HEK293 (cell line): ENCODE measurements at regions of chr15 and their contacts with region 1.

Region 1: GRCh38 chr15:51162865-51163762 is 68.4 kb upstream of the TNFAIP8L3 start:
- H3K4me3 ChIP-seq: no peak overlapping the region
- H3K27ac ChIP-seq: no peak overlapping the region; the same call in 1 of the 2 replicates
- H3K4me1 ChIP-seq: no peaks in the 10 kb centered on the region
- CTCF ChIP-seq: peak; percentile 57

Region 2: DNA sequence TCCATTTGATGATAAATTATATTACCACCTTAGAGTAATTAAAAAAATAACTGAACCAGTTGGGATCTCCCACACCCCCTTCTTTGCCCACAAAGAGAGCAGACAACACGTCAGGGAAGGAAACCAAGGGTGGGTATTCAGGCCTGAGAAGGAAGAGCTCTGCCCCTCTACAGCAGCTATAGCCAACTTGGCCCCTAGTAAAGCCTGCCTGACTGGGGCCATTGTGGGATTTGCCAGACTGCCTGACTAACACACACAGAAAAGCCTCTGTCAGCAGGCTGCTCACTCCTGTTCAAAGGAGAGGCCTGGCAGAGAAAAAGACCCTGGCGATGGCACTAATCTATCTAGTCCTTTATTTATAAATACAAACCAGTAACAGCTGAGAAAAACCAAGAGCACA is 1085.5 kb before region 1 on chr15:
- CTCF ChIA-PET with region 1: no interaction called
- POLR2A ChIA-PET with region 1: no interaction called
- H3K4me3 ChIP-seq: no peak overlapping the region
- H3K27ac ChIP-seq: no peak overlapping the region
- H3K4me1 ChIP-seq: no peaks in the 10 kb centered on the region
- CTCF ChIP-seq: no peak

Region 3: GRCh38 chr15:50753463-50753862 is 409.7 kb before region 1 on chr15:
- CTCF ChIA-PET with region 1: no interaction called
- POLR2A ChIA-PET with region 1: no interaction called
- H3K4me3 ChIP-seq: no peak overlapping the region
- H3K27ac ChIP-seq: no peak overlapping the region
- H3K4me1 ChIP-seq: peaks cover 2% of the 10 kb centered on the region; the same call in 1 of the 2 replicates
- CTCF ChIP-seq: no peak

Region 4: GRCh38 chr15:51144021-51144532 is 19.0 kb before region 1 on chr15:
- CTCF ChIA-PET with region 1: interaction called, 15 read pairs
- POLR2A ChIA-PET with region 1: no interaction called
- H3K4me3 ChIP-seq: no peak overlapping the region
- H3K27ac ChIP-seq: no peak overlapping the region
- H3K4me1 ChIP-seq: no peaks in the 10 kb centered on the region
- CTCF ChIP-seq: no peak

Region 5: GRCh38 chr15:51192521-51193280 is 29.6 kb after region 1 on chr15:
- CTCF ChIA-PET with region 1: interaction called, 76 read pairs
- POLR2A ChIA-PET with region 1: no interaction called
- H3K4me3 ChIP-seq: no peak overlapping the region
- H3K27ac ChIP-seq: no peak overlapping the region
- H3K4me1 ChIP-seq: no peaks in the 10 kb centered on the region; the same call in 1 of the 2 replicates
- CTCF ChIP-seq: peak; percentile 62; the same call in 1 of the 2 replicates

Region 6: GRCh38 chr15:51227940-51228783 is 65.0 kb after region 1 on chr15:
- CTCF ChIA-PET with region 1: interaction called, 14 read pairs
- POLR2A ChIA-PET with region 1: interaction called, 4 read pairs
- H3K4me3 ChIP-seq: no peak overlapping the region
- H3K27ac ChIP-seq: no peak overlapping the region
- H3K4me1 ChIP-seq: no peaks in the 10 kb centered on the region
- CTCF ChIP-seq: no peak

Region 7: DNA sequence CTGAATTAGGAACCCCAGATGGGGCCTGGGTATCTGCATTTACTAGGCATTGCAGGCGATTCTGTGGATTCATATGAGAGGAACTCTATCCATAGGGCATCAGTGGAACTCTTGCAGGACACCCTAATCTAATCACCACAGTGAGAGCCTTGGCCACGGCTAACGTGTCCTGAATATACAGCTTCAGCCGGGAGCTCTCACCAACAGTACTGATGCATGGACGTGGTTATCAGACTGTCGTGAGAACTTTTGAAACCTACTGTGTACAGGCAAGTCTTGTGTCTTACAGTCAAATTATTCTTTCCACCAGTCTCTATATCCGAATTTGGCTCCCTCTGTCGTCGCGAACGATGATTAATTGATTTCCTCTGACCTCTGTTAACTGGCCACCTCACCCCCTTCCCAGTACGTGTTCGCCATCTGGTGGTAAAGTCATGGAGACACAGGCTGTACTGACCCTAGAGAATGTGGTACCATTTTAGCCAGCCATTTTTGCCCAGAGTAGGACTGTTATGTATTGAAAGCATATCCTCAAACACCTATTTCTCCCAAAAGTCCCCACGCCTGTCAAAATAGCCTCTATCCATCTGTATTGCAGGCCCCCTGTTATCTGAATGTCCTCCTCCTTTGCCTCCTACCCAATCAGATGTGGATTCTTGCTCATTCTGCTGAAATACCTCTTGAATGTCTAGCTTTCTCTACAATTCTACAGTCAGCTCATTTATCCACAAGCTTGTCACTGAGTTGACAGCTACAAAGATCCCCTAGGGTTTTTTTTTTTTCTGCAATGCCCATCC is 218.1 kb after region 1 on chr15:
- CTCF ChIA-PET with region 1: interaction called, 37 read pairs
- POLR2A ChIA-PET with region 1: no interaction called
- H3K4me3 ChIP-seq: no peak overlapping the region
- H3K27ac ChIP-seq: no peak overlapping the region
- H3K4me1 ChIP-seq: no peaks in the 10 kb centered on the region
- CTCF ChIP-seq: peak; percentile 92